Activated CD4-positive, alpha-beta T cell treated with anti-CD3 and anti-CD28 coated beads, Interleukin-2, amount 10 ng/mL, durations not matched to agents 7 days and 5 days (primary cell): ENCODE measurements at regions of chr11 and their contacts with region 1.

Region 1: GRCh38 chr11:48109046-48109666 is 107.5 kb upstream of the OR4B1 start:
- DNase-seq: no peak
- H3K4me3 Mint-ChIP-seq: peak overlapping the region; percentile 60
- H3K27ac Mint-ChIP-seq: peak overlapping the region; percentile 90
- H3K4me1 Mint-ChIP-seq: peaks cover 61% of the 10 kb centered on the region
- H3K27me3 Mint-ChIP-seq: no peaks in the 10 kb centered on the region

Region 2: GRCh38 chr11:47924184-47924691 is 184.9 kb before region 1 on chr11:
- CTCF ChIA-PET with region 1: interaction called, 10 read pairs
- POLR2A ChIA-PET with region 1: no interaction called
- DNase-seq: no peak
- H3K4me3 Mint-ChIP-seq: no peak overlapping the region
- H3K27ac Mint-ChIP-seq: peak overlapping the region; percentile 72
- H3K4me1 Mint-ChIP-seq: peaks cover 47% of the 10 kb centered on the region
- H3K27me3 Mint-ChIP-seq: no peaks in the 10 kb centered on the region

Region 3: DNA sequence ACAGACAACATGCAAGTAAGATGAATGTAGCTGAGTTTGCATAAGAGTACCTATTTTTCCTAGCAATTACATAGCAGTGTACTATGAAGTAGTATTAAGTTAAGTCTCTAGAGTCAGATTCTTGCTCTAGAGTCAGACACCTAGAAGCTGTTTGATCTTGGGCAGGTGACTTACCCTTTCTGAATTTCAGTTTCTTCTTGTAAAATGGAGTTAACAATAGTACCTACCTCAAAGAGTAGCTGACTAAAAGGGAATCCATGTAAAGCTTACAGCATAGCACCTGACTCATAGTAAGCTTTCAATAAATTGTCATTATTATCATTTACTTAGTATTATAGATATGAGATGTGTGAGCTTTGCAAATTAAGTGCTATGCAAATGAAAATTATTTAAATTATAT is 176.6 kb before region 1 on chr11:
- CTCF ChIA-PET with region 1: interaction called, 75 read pairs
- POLR2A ChIA-PET with region 1: interaction called, 5 read pairs
- DNase-seq: no peak
- H3K4me3 Mint-ChIP-seq: no peak overlapping the region
- H3K27ac Mint-ChIP-seq: no peak overlapping the region
- H3K4me1 Mint-ChIP-seq: peaks cover 39% of the 10 kb centered on the region
- H3K27me3 Mint-ChIP-seq: no peaks in the 10 kb centered on the region

Region 4: GRCh38 chr11:48055292-48056132 is 53.6 kb before region 1 on chr11:
- CTCF ChIA-PET with region 1: interaction called, 22 read pairs
- POLR2A ChIA-PET with region 1: interaction called, 6 read pairs
- DNase-seq: peak; percentile 89
- H3K4me3 Mint-ChIP-seq: peak overlapping the region; percentile 34
- H3K27ac Mint-ChIP-seq: peak overlapping the region; percentile 82
- H3K4me1 Mint-ChIP-seq: peaks cover 90% of the 10 kb centered on the region
- H3K27me3 Mint-ChIP-seq: no peaks in the 10 kb centered on the region

Region 5: DNA sequence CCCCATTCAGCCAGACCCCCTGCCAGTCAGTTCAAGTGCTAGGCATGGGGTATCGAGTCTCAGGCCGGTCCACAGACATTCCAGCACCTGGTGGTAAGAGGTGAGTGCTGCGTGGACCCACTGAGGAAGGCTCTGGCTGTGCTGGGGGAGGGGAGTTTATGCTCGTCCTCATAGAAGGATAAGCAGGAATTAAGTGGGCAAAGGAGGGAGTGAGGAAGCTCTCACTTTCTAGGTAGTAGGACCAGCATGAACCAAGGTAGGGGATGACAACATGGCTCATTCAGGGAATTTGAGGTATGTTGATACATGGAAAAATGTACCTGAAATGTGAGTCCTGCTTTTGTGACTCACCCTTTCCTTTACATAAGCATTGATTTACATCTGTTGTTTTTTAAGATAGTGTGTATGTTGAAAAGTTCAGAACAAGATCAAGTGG is 12.1 kb before region 1 on chr11:
- CTCF ChIA-PET with region 1: interaction called, 16 read pairs
- POLR2A ChIA-PET with region 1: no interaction called
- DNase-seq: no peak
- H3K4me3 Mint-ChIP-seq: no peak overlapping the region
- H3K27ac Mint-ChIP-seq: peak overlapping the region; percentile 0
- H3K4me1 Mint-ChIP-seq: peaks cover 59% of the 10 kb centered on the region
- H3K27me3 Mint-ChIP-seq: no peaks in the 10 kb centered on the region

Region 6: GRCh38 chr11:48141475-48142122 is 32.4 kb after region 1 on chr11:
- CTCF ChIA-PET with region 1: no interaction called
- POLR2A ChIA-PET with region 1: no interaction called
- DNase-seq: no peak
- H3K4me3 Mint-ChIP-seq: no peak overlapping the region
- H3K27ac Mint-ChIP-seq: no peak overlapping the region
- H3K4me1 Mint-ChIP-seq: peaks cover 7% of the 10 kb centered on the region
- H3K27me3 Mint-ChIP-seq: no peaks in the 10 kb centered on the region

Region 7: DNA sequence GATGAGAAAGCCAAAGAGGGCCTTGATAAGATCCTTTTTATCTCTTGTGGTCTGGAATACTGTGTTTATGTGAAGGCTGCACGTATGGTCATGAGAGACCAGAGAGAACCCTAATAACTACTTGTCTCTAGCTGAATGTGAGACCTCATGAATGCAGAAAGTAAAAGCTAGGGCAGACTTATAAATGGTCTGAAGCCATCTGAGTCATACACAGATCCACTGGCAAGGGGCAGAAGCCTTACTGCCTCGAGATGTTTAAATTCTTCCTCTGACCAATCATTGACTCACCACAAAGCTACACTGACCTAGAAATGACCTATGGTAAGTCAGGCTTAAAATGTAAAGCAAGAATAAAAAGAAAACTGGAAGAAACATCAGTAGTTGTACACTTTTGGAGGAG is 84.7 kb after region 1 on chr11:
- CTCF ChIA-PET with region 1: no interaction called
- POLR2A ChIA-PET with region 1: no interaction called
- DNase-seq: no peak
- H3K4me3 Mint-ChIP-seq: no peak overlapping the region
- H3K27ac Mint-ChIP-seq: no peak overlapping the region
- H3K4me1 Mint-ChIP-seq: peaks cover 32% of the 10 kb centered on the region
- H3K27me3 Mint-ChIP-seq: peaks cover 19% of the 10 kb centered on the region